ENCODE measurements at regions of chr14 and their contacts with region 1.

Region 1: GRCh38 chr14:76710056-76711010 is 50.9 kb upstream of the VASH1 start:
- H3K4me3 ChIP-seq: no peak overlapping the region
- H3K27ac ChIP-seq: no peak overlapping the region
- H3K4me1 ChIP-seq: no peaks in the 10 kb centered on the region
- CTCF ChIP-seq: peak; percentile 29; the same call in 1 of the 2 replicates

Region 2: GRCh38 chr14:76720382-76720813 is 10.1 kb after region 1 on chr14:
- CTCF ChIA-PET with region 1: interaction called, 18 read pairs
- POLR2A ChIA-PET with region 1: interaction called, 13 read pairs
- H3K4me3 ChIP-seq: no peak overlapping the region
- H3K27ac ChIP-seq: no peak overlapping the region
- H3K4me1 ChIP-seq: no peaks in the 10 kb centered on the region
- CTCF ChIP-seq: no peak

Region 3: DNA sequence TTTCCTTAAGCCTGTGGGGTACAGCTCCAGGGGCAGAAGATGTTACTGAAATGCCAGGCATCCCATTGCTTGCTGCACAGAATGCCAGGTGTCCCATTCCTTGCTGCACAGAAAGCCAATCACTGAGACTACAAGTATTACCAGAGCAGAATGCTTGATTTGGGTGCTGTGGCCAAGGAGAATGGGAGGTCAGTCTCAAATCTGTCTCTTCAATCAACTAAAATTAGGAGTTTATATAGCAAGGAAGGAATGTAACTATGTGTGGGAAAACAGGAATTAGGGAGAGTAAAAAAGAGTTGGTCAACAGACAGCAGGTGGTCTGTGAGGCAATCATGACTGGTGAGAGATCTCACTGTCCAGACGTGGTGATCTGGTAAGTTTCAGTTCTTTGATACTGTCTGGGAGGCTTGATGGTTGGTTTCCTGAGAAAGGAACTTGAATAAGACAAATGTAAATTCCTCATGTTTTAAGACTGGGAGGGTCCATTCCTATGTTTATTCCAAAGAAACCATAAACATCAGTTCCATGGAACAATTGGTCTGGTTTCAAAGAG is 19.7 kb after region 1 on chr14:
- CTCF ChIA-PET with region 1: interaction called, 18 read pairs
- POLR2A ChIA-PET with region 1: no interaction called
- H3K4me3 ChIP-seq: no peak overlapping the region
- H3K27ac ChIP-seq: no peak overlapping the region
- H3K4me1 ChIP-seq: no peaks in the 10 kb centered on the region
- CTCF ChIP-seq: no peak

Region 4: DNA sequence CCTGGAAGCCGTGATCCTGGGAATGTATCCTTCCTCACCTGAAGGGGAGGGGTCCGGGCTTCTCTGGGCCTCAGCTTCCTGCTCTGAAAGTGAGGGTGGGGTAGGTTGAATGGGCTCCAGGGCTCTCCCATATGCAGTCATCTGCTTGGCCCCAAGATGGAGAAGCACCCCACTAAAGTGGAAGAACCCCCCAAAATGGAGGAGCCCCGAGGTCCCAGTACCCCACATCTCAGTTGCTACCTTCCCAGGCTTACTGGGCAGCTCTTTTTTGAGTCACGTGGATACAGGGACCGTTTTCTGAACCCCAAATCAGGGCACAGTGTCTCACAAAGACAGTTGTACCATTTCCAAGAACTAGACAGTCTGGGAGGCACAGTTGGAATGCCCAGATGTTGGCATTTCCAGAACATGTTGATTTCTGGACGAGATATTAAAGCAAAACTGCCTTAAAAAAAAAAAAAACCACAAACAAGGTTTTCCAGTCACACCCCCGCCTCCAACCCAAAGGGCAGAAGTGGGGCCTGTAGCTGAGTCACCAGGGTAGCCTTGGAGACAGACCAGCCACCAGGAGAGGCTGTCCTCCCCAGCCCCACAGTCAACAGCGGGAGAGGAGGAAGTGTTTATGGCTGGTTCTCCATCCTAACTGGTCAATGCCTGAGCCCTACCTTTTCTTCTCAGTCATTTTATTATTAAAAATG is 63.0 kb after region 1 on chr14:
- CTCF ChIA-PET with region 1: interaction called, 14 read pairs
- POLR2A ChIA-PET with region 1: no interaction called
- H3K4me3 ChIP-seq: no peak overlapping the region
- H3K27ac ChIP-seq: no peak overlapping the region
- H3K4me1 ChIP-seq: 0 out of 2 replicates have a peak, but pooled peaks cover 2% of the 10 kb centered on the region
- CTCF ChIP-seq: no peak

Region 5: DNA sequence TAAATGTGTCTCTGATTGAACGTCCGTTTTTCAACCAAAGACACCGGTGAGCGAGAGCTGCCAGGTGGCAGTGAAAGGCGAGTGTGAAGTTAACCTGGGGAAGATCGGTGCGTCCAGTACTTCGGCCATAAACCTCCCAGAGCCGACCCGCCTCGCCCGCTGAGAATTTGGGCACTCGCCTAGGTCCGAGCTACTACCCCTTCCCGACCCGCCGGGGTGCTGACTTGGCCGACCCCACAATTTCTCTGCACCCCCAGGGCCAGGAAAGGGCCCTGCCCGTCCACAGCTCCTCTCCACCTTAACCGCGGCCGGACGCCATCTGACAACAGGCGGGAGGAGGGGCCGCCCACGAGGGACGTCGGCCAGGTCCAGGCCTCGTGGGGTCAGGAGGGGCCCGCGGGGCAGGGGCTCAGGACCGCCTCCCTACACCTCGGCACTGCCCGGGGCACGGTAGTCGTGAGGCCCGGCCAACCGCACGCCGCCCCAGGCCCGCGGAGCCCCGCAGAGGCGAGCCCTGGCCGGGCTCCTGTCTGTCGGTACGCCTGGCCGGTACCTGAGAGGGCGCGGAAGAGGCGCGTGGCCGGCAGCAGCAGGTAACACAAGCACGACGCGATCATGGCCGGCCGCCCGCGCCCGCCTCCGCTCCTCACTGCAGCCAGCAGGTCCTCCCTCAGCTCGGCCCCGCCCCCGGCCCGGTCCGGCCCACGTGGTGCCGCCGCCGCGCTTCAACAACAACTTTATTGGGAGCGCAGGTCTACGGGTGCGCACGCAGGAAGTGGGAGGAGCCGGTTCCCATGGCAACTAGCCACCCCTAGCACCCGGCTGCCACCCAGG is 102.1 kb after region 1 on chr14 and contains the start of gene ANGEL1:
- CTCF ChIA-PET with region 1: interaction called, 28 read pairs
- POLR2A ChIA-PET with region 1: no interaction called
- H3K4me3 ChIP-seq: peak within 1 kb of the TSS; percentile 72
- H3K27ac ChIP-seq: peak within 1 kb of the TSS; percentile 79; the same call in 1 of the 2 replicates
- H3K4me1 ChIP-seq: peaks cover 14% of the 10 kb centered on the region; the same call in 1 of the 2 replicates
- CTCF ChIP-seq: no peak

Region 6: GRCh38 chr14:76882651-76883050 is 172.3 kb after region 1 on chr14:
- CTCF ChIA-PET with region 1: no interaction called
- POLR2A ChIA-PET with region 1: no interaction called
- H3K4me3 ChIP-seq: no peak overlapping the region
- H3K27ac ChIP-seq: no peak overlapping the region
- H3K4me1 ChIP-seq: no peaks in the 10 kb centered on the region
- CTCF ChIP-seq: no peak

Measured in HEK293 (cell line).